Activated CD8-positive, alpha-beta T cell treated with anti-CD3 and anti-CD28 coated beads for 36 hours (primary cell): ENCODE measurements at regions of chr6 and their contacts with region 1.

Region 1: GRCh38 chr6:57316581-57317059 is 810 bp upstream of the PRIM2 start:
- DNase-seq: peak; percentile 90
- ATAC-seq: peak; percentile 90
- H3K4me3 Mint-ChIP-seq: peak overlapping the region; percentile 97
- H3K27ac Mint-ChIP-seq: peak overlapping the region; percentile 98
- H3K4me1 Mint-ChIP-seq: peaks cover 28% of the 10 kb centered on the region
- H3K27me3 Mint-ChIP-seq: no peaks in the 10 kb centered on the region
- CTCF ChIP-seq: peak; percentile 61

Region 2: DNA sequence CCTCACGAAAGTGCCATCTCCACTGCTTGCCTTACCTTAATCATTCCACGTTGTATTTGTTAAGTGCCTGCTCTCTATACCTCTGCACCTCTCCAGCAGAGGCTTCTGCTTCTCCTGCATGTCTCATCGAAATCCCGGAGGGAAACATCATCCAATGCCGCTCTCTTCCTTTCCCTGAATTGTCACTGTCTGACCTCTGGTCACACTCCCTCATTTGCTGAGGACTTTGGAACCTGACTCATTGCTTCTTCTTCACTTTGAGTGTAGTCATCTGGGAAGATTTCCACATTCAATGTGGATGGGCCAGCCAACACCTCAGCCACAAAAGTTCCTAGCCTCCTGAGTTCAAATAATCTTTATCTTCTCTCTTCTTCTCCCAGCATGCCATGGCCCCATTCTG is 440.7 kb before region 1 on chr6:
- CTCF ChIA-PET with region 1: no interaction called
- POLR2A ChIA-PET with region 1: no interaction called
- intact Hi-C with region 1: no loop called
- DNase-seq: no peak
- ATAC-seq: no peak
- H3K4me3 Mint-ChIP-seq: no peak overlapping the region
- H3K27ac Mint-ChIP-seq: no peak overlapping the region
- H3K4me1 Mint-ChIP-seq: no peaks in the 10 kb centered on the region
- H3K27me3 Mint-ChIP-seq: peaks cover 8% of the 10 kb centered on the region
- CTCF ChIP-seq: no peak

Region 3: GRCh38 chr6:56902641-56903464 is 413.8 kb before region 1 on chr6:
- CTCF ChIA-PET with region 1: interaction called, 138 read pairs
- POLR2A ChIA-PET with region 1: interaction called, 3 read pairs
- intact Hi-C with region 1: loop called (anchors 2 kb)
- DNase-seq: no peak
- ATAC-seq: no peak
- H3K4me3 Mint-ChIP-seq: no peak overlapping the region
- H3K27ac Mint-ChIP-seq: no peak overlapping the region
- H3K4me1 Mint-ChIP-seq: no peaks in the 10 kb centered on the region
- H3K27me3 Mint-ChIP-seq: peaks cover 4% of the 10 kb centered on the region
- CTCF ChIP-seq: peak; percentile 62

Region 4: GRCh38 chr6:57013521-57013926 is 303.1 kb before region 1 on chr6:
- CTCF ChIA-PET with region 1: interaction called, 4 read pairs
- POLR2A ChIA-PET with region 1: no interaction called
- intact Hi-C with region 1: loop called (anchors 10 kb)
- DNase-seq: no peak
- ATAC-seq: no peak
- H3K4me3 Mint-ChIP-seq: no peak overlapping the region
- H3K27ac Mint-ChIP-seq: no peak overlapping the region
- H3K4me1 Mint-ChIP-seq: no peaks in the 10 kb centered on the region
- H3K27me3 Mint-ChIP-seq: peaks cover 13% of the 10 kb centered on the region
- CTCF ChIP-seq: no peak

Region 5: DNA sequence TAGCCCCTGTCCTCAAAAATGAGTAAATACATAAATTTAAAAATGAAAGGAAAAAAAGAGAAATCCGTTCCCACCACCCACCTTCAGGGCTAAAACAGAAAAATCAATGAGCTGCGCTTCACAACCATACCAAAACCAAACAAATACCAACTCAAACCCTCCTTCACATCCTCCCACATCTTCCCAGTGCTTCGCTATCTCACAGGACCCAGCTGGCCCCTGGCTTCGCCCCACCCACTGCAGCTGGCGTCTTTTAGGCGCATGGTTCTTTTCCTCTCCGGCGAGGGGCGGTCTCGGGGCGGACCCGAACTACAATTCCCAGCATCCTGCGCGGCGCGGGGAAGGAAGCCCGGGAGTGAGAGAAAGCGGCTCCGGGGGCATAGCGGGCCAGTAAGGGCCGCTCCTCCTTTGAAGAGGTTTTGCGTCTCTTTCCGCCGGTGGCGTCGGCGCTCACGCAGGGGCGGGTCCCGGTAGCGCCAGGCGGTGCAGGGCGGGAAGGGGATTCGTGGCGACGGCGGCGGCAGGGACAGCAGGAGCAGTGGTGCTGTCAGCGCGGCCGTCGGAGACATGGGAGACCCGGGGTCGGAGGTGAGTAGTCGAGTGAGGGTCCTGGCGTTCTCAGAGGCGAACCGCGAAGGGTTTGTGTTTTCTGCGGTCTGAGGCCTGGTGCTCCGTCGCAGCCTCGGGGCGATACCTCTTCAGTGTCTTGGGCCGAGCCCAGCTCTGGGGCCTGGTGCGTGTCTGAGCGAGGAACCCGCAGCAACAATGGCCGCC is 226.7 kb before region 1 on chr6 and contains the start of gene ZNF451:
- CTCF ChIA-PET with region 1: no interaction called
- POLR2A ChIA-PET with region 1: no interaction called
- intact Hi-C with region 1: loop called (anchors 10 kb)
- DNase-seq: peak; percentile 98
- ATAC-seq: peak; percentile 96
- H3K4me3 Mint-ChIP-seq: peak within 1 kb of the TSS; percentile 78
- H3K27ac Mint-ChIP-seq: peak within 1 kb of the TSS; percentile 86
- H3K4me1 Mint-ChIP-seq: peaks cover 32% of the 10 kb centered on the region
- H3K27me3 Mint-ChIP-seq: no peaks in the 10 kb centered on the region
- CTCF ChIP-seq: no peak
- total RNA-seq, gene ZNF451: 44.4 to 46.8 TPM

Region 6: DNA sequence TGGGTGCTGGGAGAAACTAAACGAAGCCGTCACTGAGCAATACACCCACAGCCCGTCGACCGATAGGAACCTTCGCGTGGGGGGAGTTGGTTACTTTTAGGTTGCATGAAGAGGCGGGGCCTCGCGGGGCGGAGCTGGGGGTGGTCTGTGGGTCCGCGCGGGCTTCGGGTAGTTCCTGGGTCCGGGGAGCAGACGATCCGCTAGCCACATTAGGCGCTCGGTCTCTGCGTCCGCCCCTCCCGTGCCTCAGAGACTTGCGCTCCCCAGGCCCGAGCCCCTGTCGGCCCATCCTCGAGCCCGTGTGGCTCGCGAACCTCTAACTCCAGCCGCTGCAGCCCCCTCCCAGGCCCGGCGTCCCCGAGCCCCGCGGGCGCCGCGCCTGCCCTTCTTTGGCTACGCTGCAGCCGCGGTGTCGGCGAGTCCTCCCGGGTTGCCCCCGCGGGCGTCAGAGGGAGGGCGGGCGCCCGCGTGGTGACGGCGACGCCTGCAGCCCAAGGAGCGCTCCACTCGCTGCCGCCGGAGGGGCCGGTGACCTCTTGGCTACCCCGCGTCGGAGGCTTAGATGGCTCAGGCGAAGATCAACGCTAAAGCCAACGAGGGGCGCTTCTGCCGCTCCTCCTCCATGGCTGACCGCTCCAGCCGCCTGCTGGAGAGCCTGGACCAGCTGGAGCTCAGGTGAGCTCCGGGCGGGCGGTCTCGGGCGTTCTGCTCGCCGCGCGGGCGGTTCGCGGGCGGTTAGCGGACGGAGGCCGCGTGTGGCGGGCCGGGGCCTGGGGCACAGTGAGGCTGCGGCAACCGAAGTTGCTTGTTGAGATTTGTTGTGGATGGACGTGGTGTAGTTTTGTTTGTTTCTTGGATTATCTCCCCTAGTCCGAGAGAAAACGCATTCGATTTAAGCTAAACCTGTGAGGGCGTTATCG is 144.2 kb before region 1 on chr6 and contains the start of gene BAG2:
- CTCF ChIA-PET with region 1: interaction called, 4 read pairs
- POLR2A ChIA-PET with region 1: interaction called, 4 read pairs
- intact Hi-C with region 1: loop called (anchors 2 kb)
- DNase-seq: peak; percentile 97
- ATAC-seq: peak; percentile 89
- H3K4me3 Mint-ChIP-seq: peak within 1 kb of the TSS; percentile 94
- H3K27ac Mint-ChIP-seq: peak within 1 kb of the TSS; percentile 94
- H3K4me1 Mint-ChIP-seq: peaks cover 24% of the 10 kb centered on the region
- H3K27me3 Mint-ChIP-seq: no peaks in the 10 kb centered on the region
- CTCF ChIP-seq: no peak
- total RNA-seq, gene BAG2: 8.4 to 8.9 TPM

Region 7: GRCh38 chr6:57242505-57242904 is 74.1 kb before region 1 on chr6:
- CTCF ChIA-PET with region 1: no interaction called
- POLR2A ChIA-PET with region 1: no interaction called
- intact Hi-C with region 1: no loop called
- DNase-seq: no peak
- ATAC-seq: no peak
- H3K4me3 Mint-ChIP-seq: no peak overlapping the region
- H3K27ac Mint-ChIP-seq: no peak overlapping the region
- H3K4me1 Mint-ChIP-seq: no peaks in the 10 kb centered on the region
- H3K27me3 Mint-ChIP-seq: peaks cover 12% of the 10 kb centered on the region
- CTCF ChIP-seq: no peak

Region 8: GRCh38 chr6:57252975-57253374 is 63.6 kb before region 1 on chr6:
- CTCF ChIA-PET with region 1: no interaction called
- POLR2A ChIA-PET with region 1: no interaction called
- intact Hi-C with region 1: no loop called
- DNase-seq: no peak
- ATAC-seq: no peak
- H3K4me3 Mint-ChIP-seq: no peak overlapping the region
- H3K27ac Mint-ChIP-seq: no peak overlapping the region
- H3K4me1 Mint-ChIP-seq: no peaks in the 10 kb centered on the region
- H3K27me3 Mint-ChIP-seq: peaks cover 2% of the 10 kb centered on the region
- CTCF ChIP-seq: no peak

Region 9: DNA sequence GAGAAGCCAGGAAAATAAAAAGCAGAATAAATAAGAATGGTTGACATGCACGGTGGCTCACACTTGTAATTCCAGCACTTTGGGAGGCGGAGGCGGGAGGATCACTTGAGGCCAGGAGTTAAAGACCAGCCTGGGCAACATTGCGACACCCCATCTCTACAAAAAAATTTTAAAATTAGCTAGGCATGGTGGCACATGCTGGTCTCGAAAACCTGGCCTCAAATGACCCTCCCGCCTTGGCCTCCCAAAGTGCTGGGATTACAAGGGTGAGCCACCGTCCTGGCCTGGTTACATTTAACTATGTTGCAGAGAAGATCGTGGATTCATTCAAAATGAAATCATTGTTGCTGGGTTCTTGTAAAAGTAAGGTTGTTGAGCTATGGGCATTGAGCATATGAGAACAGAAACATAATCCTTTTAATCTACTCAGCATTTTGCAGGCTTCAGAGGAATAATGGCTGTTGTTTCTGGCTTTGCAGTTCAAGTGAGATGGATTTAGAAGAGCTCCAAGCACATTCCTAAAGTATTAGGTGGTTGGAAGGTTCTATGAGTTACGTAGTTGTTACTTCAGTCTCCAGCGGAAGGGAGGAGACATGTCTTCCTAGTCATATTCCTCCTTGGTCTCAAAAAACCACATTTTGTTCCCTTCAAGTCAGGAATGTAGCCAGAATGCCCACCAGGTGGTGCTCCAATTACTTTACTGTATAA is 48.9 kb before region 1 on chr6:
- CTCF ChIA-PET with region 1: interaction called, 52 read pairs
- POLR2A ChIA-PET with region 1: interaction called, 3 read pairs
- intact Hi-C with region 1: loop called (anchors 5 kb)
- DNase-seq: peak; percentile 57
- ATAC-seq: no peak
- H3K4me3 Mint-ChIP-seq: no peak overlapping the region
- H3K27ac Mint-ChIP-seq: no peak overlapping the region
- H3K4me1 Mint-ChIP-seq: peaks cover 13% of the 10 kb centered on the region
- H3K27me3 Mint-ChIP-seq: peaks cover 11% of the 10 kb centered on the region
- CTCF ChIP-seq: no peak

Region 10: DNA sequence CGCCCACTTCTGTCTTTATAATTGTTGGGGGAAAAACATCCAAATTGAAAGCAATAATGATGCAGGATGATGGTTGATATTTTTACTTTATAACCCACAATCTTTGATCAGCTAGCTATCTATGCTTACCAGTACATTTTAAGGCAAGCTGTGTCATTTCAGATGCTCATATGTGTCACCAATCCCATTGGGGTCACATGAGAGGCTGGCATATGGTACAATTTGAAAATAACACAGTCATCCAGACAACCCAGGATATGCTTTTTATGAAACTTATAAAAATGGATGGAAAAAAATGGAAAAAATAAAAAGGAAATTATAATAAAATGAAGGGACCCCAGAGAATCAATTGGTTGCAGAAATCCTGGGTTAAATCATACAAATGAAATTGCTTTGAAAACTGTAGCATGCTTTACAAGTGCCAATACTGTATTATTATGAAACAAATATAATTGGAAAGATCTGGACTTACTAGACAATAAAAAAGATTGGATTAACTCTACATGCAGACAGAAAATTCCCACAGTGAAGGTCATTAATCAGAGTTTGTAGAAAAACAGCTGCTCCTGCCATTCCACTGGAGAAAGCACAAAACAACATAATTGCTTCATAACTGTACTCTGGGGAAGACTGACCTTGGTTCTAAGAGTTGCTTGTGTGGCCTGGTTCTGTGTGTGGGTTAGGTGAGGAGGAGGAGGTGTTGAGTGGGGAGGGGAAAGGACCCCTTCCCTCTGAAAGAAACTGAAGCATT is 12.5 kb before region 1 on chr6:
- CTCF ChIA-PET with region 1: interaction called, 15 read pairs
- POLR2A ChIA-PET with region 1: no interaction called
- intact Hi-C with region 1: no loop called
- DNase-seq: no peak
- ATAC-seq: no peak
- H3K4me3 Mint-ChIP-seq: no peak overlapping the region
- H3K27ac Mint-ChIP-seq: no peak overlapping the region
- H3K4me1 Mint-ChIP-seq: no peaks in the 10 kb centered on the region
- H3K27me3 Mint-ChIP-seq: peaks cover 7% of the 10 kb centered on the region
- CTCF ChIP-seq: no peak